ENCODE measurements at regions of chr6 and their contacts with region 1.

Region 1: GRCh38 chr6:38871741-38872568 is 156.8 kb downstream of the DNAH8 start:
- DNase-seq: peak; percentile 90
- H3K4me3 Mint-ChIP-seq: no peak overlapping the region
- H3K27ac Mint-ChIP-seq: no peak overlapping the region
- H3K4me1 Mint-ChIP-seq: peaks cover 16% of the 10 kb centered on the region
- H3K27me3 Mint-ChIP-seq: peaks cover 6% of the 10 kb centered on the region

Region 2: GRCh38 chr6:38552121-38552520 is 319.8 kb before region 1 on chr6:
- intact Hi-C with region 1: no loop called
- DNase-seq: no peak
- H3K4me3 Mint-ChIP-seq: no peak overlapping the region
- H3K27ac Mint-ChIP-seq: no peak overlapping the region
- H3K4me1 Mint-ChIP-seq: peaks cover 3% of the 10 kb centered on the region
- H3K27me3 Mint-ChIP-seq: no peaks in the 10 kb centered on the region

Region 3: DNA sequence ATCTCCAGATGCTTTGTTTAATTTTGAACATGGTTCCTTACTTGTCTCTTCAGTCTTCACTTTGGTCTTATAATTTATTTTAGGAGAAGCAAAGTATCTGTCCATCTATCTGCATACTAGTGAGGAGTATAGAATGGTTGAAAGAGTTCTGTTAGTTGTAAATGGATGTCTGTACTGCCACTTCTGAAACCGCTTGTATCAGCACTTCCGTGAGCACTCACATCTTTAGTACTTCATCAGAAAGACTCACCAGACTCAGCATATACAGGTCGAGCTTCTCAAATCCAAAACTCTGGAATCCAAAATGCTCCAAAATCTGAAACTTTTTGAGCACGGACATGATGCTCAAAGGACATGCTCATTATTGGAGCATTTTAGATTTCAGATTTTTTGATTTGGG is 34.6 kb after region 1 on chr6:
- intact Hi-C with region 1: loop called (anchors 1 kb)
- DNase-seq: no peak
- H3K4me3 Mint-ChIP-seq: no peak overlapping the region
- H3K27ac Mint-ChIP-seq: no peak overlapping the region
- H3K4me1 Mint-ChIP-seq: no peaks in the 10 kb centered on the region
- H3K27me3 Mint-ChIP-seq: peaks cover 5% of the 10 kb centered on the region

Region 4: DNA sequence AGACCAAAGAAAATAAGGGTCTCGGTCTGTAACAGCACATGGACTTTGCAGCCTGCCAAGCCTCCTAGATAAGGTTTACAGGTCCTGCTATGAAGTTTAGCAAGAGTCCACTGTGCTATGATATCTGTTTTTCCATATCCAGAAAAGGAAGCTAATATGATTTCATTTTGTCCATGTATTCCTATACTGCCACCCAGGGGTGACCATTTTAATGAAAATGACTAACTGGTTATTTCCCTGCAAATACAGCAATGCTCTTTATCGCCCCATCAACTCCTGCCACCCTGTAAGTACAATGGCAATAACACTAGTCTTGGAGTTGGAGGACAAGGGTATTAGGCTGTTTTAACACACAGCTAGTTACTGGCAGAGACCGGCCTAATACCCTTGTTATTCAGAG is 61.5 kb after region 1 on chr6:
- intact Hi-C with region 1: loop called (anchors 5 kb)
- DNase-seq: no peak
- H3K4me3 Mint-ChIP-seq: no peak overlapping the region
- H3K27ac Mint-ChIP-seq: no peak overlapping the region
- H3K4me1 Mint-ChIP-seq: no peaks in the 10 kb centered on the region
- H3K27me3 Mint-ChIP-seq: peaks cover 9% of the 10 kb centered on the region

Region 5: GRCh38 chr6:39114704-39115599 is 243.0 kb after region 1 on chr6 and contains the start of gene SAYSD1:
- intact Hi-C with region 1: loop called (anchors 10 kb)
- DNase-seq: peak; percentile 98
- H3K4me3 Mint-ChIP-seq: peak within 1 kb of the TSS; percentile 87
- H3K27ac Mint-ChIP-seq: peak within 1 kb of the TSS; percentile 97
- H3K4me1 Mint-ChIP-seq: peaks cover 51% of the 10 kb centered on the region
- H3K27me3 Mint-ChIP-seq: no peaks in the 10 kb centered on the region
- total RNA-seq, gene SAYSD1: 13.7 and 14.8 TPM in 2 replicates

Region 6: DNA sequence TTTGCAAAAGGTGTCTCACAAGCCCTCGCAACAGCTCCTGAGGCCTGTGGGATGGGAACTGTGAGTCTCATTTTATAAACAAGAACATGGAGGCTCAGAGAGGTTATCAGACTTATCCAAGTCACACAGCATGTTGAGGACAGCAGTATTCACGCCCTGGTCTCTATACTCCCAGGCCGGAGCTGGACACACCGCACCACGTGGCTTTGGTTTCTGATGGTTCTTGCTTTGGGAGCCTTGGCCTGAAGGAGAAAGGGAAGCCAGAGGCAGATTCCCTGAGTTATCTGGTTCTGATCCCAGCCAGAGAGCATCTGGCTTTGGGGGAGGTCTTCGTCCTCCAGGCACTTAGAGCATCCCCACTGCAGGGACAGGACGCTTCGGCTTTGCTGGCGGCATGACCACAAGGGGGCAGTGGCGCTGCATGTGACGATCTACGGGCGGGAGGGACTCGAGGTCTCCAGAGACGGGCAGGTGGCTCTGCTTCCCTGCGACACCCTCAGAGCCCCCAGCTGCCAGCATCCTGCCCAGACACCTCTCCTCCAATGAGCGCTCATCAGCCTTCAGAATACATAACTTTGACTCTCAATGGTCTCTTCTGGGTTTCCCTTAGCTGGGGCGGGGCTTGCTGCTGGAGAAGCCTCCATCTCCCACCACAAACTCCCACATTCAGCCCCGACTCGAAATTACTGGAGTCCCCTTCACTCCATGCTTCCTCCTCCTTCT is 294.4 kb after region 1 on chr6:
- intact Hi-C with region 1: loop called (anchors 5 kb)
- DNase-seq: peak; percentile 95
- H3K4me3 Mint-ChIP-seq: no peak overlapping the region
- H3K27ac Mint-ChIP-seq: no peak overlapping the region
- H3K4me1 Mint-ChIP-seq: peaks cover 8% of the 10 kb centered on the region
- H3K27me3 Mint-ChIP-seq: no peaks in the 10 kb centered on the region

Region 7: GRCh38 chr6:39309942-39310531 is 438.1 kb after region 1 on chr6:
- intact Hi-C with region 1: loop called (anchors 2 kb)
- DNase-seq: peak; percentile 89
- H3K4me3 Mint-ChIP-seq: no peak overlapping the region
- H3K27ac Mint-ChIP-seq: no peak overlapping the region
- H3K4me1 Mint-ChIP-seq: no peaks in the 10 kb centered on the region
- H3K27me3 Mint-ChIP-seq: peaks cover 24% of the 10 kb centered on the region

Measured in activated CD4-positive, alpha-beta T cell treated with anti-CD3 and anti-CD28 coated beads, Interleukin-2, amount 10 ng/mL, durations not matched to agents 24 days and 14 days (primary cell).